ENCODE measurements at regions of chr4 and their contacts with region 1.

Region 1: DNA sequence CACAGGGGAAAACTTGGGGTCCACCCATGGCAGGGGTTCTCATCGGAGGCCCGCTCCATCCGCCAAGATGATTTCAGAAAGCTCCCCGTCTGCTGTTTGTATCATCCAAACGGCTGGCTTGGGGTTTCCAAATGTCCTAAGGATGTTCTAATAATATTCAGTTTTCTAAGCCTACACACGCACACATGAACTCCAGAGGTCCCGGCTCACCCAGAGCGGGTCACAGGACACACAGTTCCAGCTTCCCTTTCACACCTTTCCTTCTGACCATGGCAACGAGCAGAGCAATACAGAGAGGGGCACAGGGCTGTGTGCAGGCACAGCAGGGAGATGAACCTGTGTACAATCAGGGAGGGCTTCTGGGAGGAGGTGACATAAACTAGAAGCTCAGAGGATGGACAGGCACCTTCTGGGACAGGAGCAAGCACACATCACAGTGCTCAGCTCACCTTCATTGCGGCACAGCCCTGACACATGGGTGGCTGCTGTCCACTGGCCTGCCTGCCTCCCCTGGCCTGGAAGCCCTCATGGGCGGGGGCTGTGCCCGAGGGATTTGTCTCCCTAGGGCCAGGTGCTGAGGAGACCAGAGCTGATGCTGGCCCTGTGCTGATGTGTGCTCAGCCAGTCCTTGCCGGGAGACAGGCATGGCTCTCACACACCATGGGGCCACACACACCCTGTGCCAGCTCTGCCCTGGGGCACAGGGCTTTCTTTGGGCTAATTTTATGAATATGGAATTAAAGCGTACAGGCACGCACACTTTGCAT is 44.8 kb downstream of the ABLIM2 start:
- DNase-seq: no peak
- H3K4me3 ChIP-seq: no peak overlapping the region
- H3K27ac ChIP-seq: no peak overlapping the region
- H3K4me1 ChIP-seq: no peaks in the 10 kb centered on the region
- H3K27me3 ChIP-seq: no peaks in the 10 kb centered on the region
- CTCF ChIP-seq: no peak
- POLR2A ChIP-seq: no peak

Region 2: DNA sequence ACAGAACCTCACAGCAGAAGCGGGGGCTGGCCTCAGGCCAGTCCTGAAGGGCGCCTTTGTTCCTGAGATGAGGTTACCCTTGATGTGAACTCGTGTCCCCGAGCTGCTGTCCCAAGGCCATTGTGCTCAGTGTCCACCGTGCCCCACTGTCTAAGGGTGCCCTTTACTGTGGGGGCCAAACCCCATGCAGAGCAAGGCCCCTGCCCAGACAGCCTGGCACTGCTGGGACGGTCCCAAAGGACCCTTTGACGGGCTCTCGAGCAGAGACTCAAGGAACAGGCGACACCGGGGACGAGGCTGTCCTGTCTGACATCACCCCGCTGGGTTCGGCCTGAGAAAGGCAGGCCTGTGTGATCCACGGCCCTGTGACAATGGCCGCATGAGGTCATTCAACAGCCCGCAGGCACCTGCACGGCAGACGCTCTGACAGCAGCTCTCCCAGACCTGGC is 55.7 kb before region 1 on chr4:
- intact Hi-C with region 1: loop called (anchors 2 kb)
- DNase-seq: no peak
- H3K4me3 ChIP-seq: no peak overlapping the region
- H3K27ac ChIP-seq: no peak overlapping the region
- H3K4me1 ChIP-seq: no peaks in the 10 kb centered on the region
- H3K27me3 ChIP-seq: no peaks in the 10 kb centered on the region
- CTCF ChIP-seq: no peak
- POLR2A ChIP-seq: no peak